ENCODE measurements at regions of chr2 and their contacts with region 1.

Region 1: GRCh38 chr2:96138179-96139145 is at the start of gene ASTL:
- DNase-seq: peak; percentile 41 to 70 (median 60)
- ATAC-seq: peak; percentile 87
- H3K4me3 ChIP-seq: no peak within 1 kb of the TSS
- H3K27ac ChIP-seq: no peak within 1 kb of the TSS
- H3K4me1 ChIP-seq: peaks cover 0 to 9% of the 10 kb centered on the region in 2 experiments; a peak in 3 of 5 replicates
- H3K27me3 ChIP-seq: peaks cover 29 to 55% of the 10 kb centered on the region in 2 experiments
- CTCF ChIP-seq: peak; percentile 82 to 83 (median 82)
- EP300 ChIP-seq: no peak
- POLR2A ChIP-seq: no peak
- RAD21 ChIP-seq: peak; percentile 90
- polyA plus RNA-seq, gene ASTL: not detected

Region 2: DNA sequence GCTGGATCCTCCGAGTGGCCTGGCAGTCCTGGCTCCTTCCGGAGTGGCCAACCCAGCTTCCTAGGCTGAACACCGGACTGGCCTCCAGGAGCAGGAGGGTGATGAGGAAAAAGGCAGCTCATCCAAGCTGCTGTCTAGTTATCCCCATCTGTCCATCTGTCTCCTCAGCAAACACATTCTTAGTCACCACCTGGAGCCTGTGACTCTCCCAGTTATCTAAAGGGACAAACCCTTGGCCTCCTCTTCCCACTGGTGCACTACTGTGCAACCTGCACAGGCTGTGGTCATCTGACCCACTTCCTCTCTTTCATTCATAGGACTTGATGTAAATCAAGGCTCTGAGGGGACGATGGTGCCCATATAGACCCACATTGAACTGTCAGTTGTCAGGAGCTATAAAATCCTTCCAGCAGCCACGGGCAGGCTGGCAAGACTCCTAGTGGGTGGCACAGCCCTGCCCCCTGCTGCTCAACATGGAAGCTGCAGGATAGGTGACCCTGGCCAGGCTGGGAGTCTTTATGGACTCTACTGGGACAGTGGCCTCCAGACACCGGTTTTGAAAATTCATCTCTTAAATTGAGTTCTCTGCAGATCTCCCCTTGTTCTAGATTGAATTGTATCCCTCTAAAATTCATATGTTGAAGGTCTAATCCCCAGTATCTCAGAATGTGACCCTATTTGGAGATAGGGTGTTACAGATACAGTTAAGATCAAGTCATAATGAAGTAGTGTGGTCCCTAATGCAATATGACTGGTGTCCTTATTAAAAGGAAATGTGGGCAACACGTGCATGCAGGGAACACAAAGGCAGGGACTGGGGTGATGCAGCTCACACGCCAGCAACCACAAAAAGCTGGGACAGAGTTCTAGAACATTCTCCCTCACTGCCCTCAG is 36.0 kb after region 1 on chr2:
- CTCF ChIA-PET with region 1: interaction called, 12 read pairs
- POLR2A ChIA-PET with region 1: interaction called, 6 read pairs
- in situ Hi-C with region 1: no loop called
- intact Hi-C with region 1: loop called (anchors 1 kb)
- DNase-seq: peak; percentile 79 to 81 (median 80)
- ATAC-seq: peak; percentile 95
- H3K4me3 ChIP-seq: no peak overlapping the region
- H3K27ac ChIP-seq: no peak overlapping the region
- H3K4me1 ChIP-seq: peaks cover 4 to 6% of the 10 kb centered on the region in 2 experiments; a peak in 4 of 5 replicates
- H3K27me3 ChIP-seq: peaks cover 3 to 4% of the 10 kb centered on the region in 2 experiments; a peak in 3 of 5 replicates
- CTCF ChIP-seq: peak; percentile 91 to 96 (median 95)
- EP300 ChIP-seq: no peak
- POLR2A ChIP-seq: no peak
- RAD21 ChIP-seq: peak; percentile 89 to 91

Region 3: DNA sequence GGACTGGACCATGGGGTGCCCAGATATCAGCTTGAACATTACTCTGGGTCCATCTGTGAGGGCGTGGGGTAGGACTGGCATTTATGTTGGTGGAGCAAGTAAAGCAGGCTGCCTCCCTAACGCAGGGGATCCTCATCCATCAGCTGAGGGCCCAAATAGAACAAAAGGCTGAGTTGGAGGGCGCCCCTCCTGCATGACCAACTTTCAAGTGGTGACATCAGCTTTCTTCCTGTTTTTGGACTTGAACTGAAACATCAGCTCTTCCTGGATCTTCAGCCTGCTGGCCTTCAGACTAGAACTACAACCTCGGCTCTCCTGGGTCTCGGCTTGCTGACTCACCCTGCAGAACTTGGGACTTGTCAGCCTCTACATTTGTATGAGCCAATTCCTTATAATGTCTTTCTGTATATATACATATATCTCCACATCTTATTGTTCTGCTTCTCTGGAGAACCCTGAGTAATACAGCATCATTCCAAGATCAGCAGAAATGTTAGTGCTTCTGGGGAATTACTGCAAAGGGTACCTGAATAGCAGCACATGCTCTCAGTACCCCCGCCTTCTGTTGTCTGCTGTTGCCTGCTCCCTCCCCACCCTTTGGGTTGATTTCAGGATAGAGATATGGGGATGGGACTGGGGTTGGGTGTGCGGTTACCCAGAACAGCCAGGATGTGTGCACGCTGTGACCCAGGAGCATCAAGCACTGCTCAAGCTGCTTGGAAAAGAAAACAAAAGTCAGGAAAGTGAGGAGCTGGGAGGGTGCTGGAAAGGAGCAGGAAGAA is 107.3 kb after region 1 on chr2:
- CTCF ChIA-PET with region 1: no interaction called
- POLR2A ChIA-PET with region 1: no interaction called
- in situ Hi-C with region 1: no loop called
- intact Hi-C with region 1: no loop called
- DNase-seq: peak in 2 of 4 experiments; percentile 54 to 58
- ATAC-seq: peak; percentile 80
- H3K4me3 ChIP-seq: no peak overlapping the region
- H3K27ac ChIP-seq: peak overlapping the region; percentile 65
- H3K4me1 ChIP-seq: peaks cover 8 to 19% of the 10 kb centered on the region in 2 experiments; a peak in 4 of 5 replicates
- H3K27me3 ChIP-seq: no peaks in the 10 kb centered on the region
- CTCF ChIP-seq: no peak
- EP300 ChIP-seq: peak; percentile 24; the same call in 1 of the 2 replicates
- POLR2A ChIP-seq: no peak
- RAD21 ChIP-seq: no peak; a peak in 1 of 4 replicates

Region 4: GRCh38 chr2:96260404-96261260 is 122.2 kb after region 1 on chr2:
- CTCF ChIA-PET with region 1: interaction called, 3 read pairs
- POLR2A ChIA-PET with region 1: no interaction called
- in situ Hi-C with region 1: no loop called
- intact Hi-C with region 1: loop called (anchors 2 kb)
- DNase-seq: peak; percentile 56 to 75 (median 66)
- ATAC-seq: peak; percentile 78
- H3K4me3 ChIP-seq: no peak overlapping the region
- H3K27ac ChIP-seq: peak overlapping the region; percentile 62
- H3K4me1 ChIP-seq: peaks cover 24 to 34% of the 10 kb centered on the region in 2 experiments
- H3K27me3 ChIP-seq: no peaks in the 10 kb centered on the region
- CTCF ChIP-seq: peak; percentile 61 to 65 (median 64)
- EP300 ChIP-seq: no peak; the same call in 1 of the 2 replicates
- POLR2A ChIP-seq: no peak
- RAD21 ChIP-seq: peak; percentile 41 to 51